ENCODE measurements at regions of chrX and their contacts with region 1.

Region 1: DNA sequence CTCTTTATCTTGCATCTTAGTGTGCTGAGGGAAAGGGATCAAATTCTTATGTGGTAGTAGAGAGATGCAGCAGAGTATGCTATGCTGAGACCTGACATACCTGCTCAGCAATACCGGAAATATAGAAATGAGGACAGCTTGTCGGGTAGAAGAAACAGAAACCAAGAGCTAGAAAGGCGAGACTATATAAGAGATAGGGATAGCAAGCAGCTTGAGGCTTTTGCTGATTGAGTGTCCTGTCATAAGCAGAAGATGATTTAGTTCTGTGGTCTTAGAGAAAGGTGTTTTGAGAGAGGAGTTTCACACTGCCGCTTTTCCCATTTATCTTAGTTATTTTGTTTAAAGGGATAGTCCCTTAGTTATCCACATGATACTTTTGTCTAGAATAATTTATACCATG is 31.7 kb downstream of the USP9X start:
- DNase-seq: no peak
- H3K4me3 ChIP-seq: no peak overlapping the region
- H3K27ac ChIP-seq: no peak overlapping the region
- H3K4me1 ChIP-seq: peaks cover 0 to 41% (median 12%) of the 10 kb centered on the region in 4 donors
- H3K27me3 ChIP-seq: no peaks in the 10 kb centered on the region
- CTCF ChIP-seq: no peak
- EP300 ChIP-seq: no peak
- POLR2A ChIP-seq: no peak

Region 2: DNA sequence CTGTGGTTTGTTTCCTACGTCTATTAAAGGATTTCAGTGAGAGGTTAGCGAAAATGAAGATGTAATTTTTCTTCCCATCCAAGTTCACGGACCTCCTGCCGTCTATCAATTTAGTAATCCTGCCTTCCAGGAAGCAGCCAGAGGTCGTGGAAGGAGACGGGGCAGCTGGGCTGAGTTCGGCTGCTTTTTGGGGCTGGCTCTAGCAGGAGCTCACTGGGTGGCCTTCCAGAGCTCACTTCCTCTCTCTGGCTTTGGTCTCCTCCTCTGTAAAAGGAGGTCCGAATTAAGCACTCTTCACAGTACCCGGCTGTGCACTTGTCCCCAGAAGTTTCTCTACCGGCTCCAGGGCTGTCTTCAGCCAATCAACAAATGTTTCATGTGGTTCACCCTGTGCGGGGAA is 1314.6 kb before region 1 on chrX:
- intact Hi-C with region 1: no loop called
- DNase-seq: no peak
- H3K4me3 ChIP-seq: no peak overlapping the region
- H3K27ac ChIP-seq: no peak overlapping the region
- H3K4me1 ChIP-seq: no peaks in the 10 kb centered on the region
- H3K27me3 ChIP-seq: no peaks in the 10 kb centered on the region
- CTCF ChIP-seq: no peak
- EP300 ChIP-seq: no peak
- POLR2A ChIP-seq: no peak

Region 3: DNA sequence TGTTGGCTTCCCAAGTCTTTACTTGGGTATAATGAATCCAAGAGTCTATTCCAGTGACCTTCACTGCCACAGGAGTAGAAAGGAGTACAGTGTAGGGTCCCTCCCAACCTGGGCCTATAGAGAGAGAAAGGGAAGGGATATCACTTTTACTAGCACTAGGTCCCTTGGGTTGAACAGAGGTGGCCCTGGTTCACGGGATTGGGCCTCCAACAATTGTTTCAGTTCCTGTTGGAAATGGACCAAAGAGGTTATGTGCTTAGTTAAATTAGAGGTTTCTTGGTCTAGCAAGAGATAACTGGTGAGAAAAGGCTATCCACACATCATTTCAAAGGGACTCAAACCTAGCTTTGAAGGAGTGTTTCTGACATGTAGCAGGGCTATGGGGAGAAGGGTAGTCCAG is 324.5 kb before region 1 on chrX:
- intact Hi-C with region 1: loop called (anchors 10 kb)
- DNase-seq: no peak
- H3K4me3 ChIP-seq: no peak overlapping the region
- H3K27ac ChIP-seq: no peak overlapping the region
- H3K4me1 ChIP-seq: peaks cover 0 to 5% (median 2%) of the 10 kb centered on the region in 4 donors
- H3K27me3 ChIP-seq: no peaks in the 10 kb centered on the region
- CTCF ChIP-seq: no peak
- EP300 ChIP-seq: no peak
- POLR2A ChIP-seq: no peak

Region 4: GRCh38 chrX:40877887-40878286 is 239.1 kb before region 1 on chrX:
- intact Hi-C with region 1: loop called (anchors 5 kb)
- DNase-seq: no peak
- H3K4me3 ChIP-seq: no peak overlapping the region
- H3K27ac ChIP-seq: no peak overlapping the region
- H3K4me1 ChIP-seq: no peaks in the 10 kb centered on the region
- H3K27me3 ChIP-seq: no peaks in the 10 kb centered on the region
- CTCF ChIP-seq: peak in 2 of 4 experiments; percentile 10 to 33
- EP300 ChIP-seq: no peak
- POLR2A ChIP-seq: no peak

Region 5: GRCh38 chrX:40945361-40945713 is 171.6 kb before region 1 on chrX:
- intact Hi-C with region 1: loop called (anchors 10 kb)
- DNase-seq: peak; percentile 76
- H3K4me3 ChIP-seq: no peak overlapping the region
- H3K27ac ChIP-seq: peak overlapping the region in 3 of 4 donors; percentile 34 to 50 (median 42)
- H3K4me1 ChIP-seq: peaks cover 0 to 6% (median 0%) of the 10 kb centered on the region in 4 donors
- H3K27me3 ChIP-seq: no peaks in the 10 kb centered on the region
- CTCF ChIP-seq: no peak
- EP300 ChIP-seq: no peak
- POLR2A ChIP-seq: no peak